Activated CD4-positive, alpha-beta memory T cell treated with anti-CD3 and anti-CD28 coated beads, Interleukin-2, amount 10 ng/mL, durations not matched to agents 7 days and 5 days (primary cell): ENCODE measurements at regions of chrX and their contacts with region 1.

Region 1: GRCh38 chrX:3712051-3712869 is 1.2 kb downstream of the PRKX start:
- DNase-seq: peak; percentile 18
- H3K4me3 Mint-ChIP-seq: peak overlapping the region; percentile 99
- H3K27ac Mint-ChIP-seq: peak overlapping the region; percentile 91
- H3K4me1 Mint-ChIP-seq: peaks cover 34% of the 10 kb centered on the region
- H3K27me3 Mint-ChIP-seq: no peaks in the 10 kb centered on the region

Region 2: GRCh38 chrX:3479026-3479425 is 233.2 kb before region 1 on chrX:
- CTCF ChIA-PET with region 1: no interaction called
- POLR2A ChIA-PET with region 1: no interaction called
- DNase-seq: no peak
- H3K4me3 Mint-ChIP-seq: no peak overlapping the region
- H3K27ac Mint-ChIP-seq: no peak overlapping the region
- H3K4me1 Mint-ChIP-seq: no peaks in the 10 kb centered on the region
- H3K27me3 Mint-ChIP-seq: no peaks in the 10 kb centered on the region

Region 3: DNA sequence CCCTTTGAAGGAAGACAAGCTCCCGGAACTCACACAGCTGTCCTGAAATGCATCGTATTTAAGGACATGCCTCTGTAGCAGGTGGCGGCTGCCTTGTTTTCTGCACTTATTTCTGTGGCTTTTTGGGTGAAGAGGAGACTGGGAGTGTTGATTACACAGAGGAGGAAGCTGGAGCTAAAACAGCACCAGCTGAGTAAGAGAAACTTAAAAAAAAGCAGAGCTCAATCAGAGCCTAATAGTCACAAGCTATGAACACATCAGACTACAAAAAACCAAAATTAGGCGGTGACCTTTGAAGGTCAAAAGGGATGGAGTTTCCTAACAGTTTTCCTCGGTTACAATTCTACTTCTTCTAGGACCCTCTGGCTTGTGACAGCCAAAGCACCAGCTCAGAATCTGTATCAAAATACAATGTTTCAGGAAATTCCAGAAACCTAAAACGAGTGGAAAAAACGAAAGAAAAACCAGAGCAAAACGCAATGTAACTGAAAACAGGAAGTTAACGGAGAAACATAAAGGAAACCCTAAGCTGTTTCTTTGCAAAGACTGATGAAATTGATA is 12.4 kb before region 1 on chrX:
- CTCF ChIA-PET with region 1: no interaction called
- POLR2A ChIA-PET with region 1: interaction called, 15 read pairs
- DNase-seq: no peak
- H3K4me3 Mint-ChIP-seq: peak overlapping the region; percentile 77
- H3K27ac Mint-ChIP-seq: peak overlapping the region; percentile 86
- H3K4me1 Mint-ChIP-seq: peaks cover 79% of the 10 kb centered on the region
- H3K27me3 Mint-ChIP-seq: no peaks in the 10 kb centered on the region

Region 4: DNA sequence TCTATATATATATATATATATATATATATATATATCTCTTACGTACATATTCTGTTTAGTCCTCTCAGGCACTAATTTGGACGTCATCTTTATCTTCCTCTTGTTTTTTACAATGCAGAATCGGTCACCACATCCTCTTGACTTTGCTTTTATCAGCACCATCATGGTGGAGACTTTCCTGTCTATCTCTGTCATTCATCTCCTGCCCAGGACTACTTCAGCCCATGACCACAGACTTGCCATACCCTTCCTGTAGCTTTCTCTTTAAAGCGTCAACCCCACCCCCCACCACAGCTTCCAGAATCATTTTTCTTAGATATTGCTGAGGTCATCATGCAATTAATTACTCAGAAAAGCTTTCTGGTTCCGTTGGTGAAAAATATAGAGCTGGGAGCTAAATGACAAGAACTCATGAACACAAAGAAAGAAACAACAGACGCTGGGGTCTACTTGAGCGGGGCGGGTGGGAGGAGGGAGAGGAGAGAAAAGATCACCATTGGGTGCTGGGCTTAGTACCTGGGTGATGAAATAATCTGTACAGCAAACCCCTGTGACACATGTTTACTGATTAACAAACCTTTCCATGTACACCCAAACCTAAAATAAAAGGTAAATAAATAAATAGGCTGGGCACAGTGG is 31.7 kb after region 1 on chrX:
- CTCF ChIA-PET with region 1: interaction called, 3 read pairs
- POLR2A ChIA-PET with region 1: interaction called, 15 read pairs
- DNase-seq: peak; percentile 75
- H3K4me3 Mint-ChIP-seq: peak overlapping the region; percentile 17
- H3K27ac Mint-ChIP-seq: peak overlapping the region; percentile 91
- H3K4me1 Mint-ChIP-seq: peaks cover 54% of the 10 kb centered on the region
- H3K27me3 Mint-ChIP-seq: no peaks in the 10 kb centered on the region